ENCODE measurements at regions of chr15 and their contacts with region 1.

Region 1: GRCh38 chr15:63752075-63752684 is 81.6 kb downstream of the HERC1 start:
- DNase-seq: peak; percentile 78
- H3K4me3 ChIP-seq: no peak overlapping the region
- H3K27ac ChIP-seq: no peak overlapping the region
- H3K4me1 ChIP-seq: no peaks in the 10 kb centered on the region
- H3K27me3 ChIP-seq: no peaks in the 10 kb centered on the region
- CTCF ChIP-seq: peak; percentile 44 to 62
- POLR2A ChIP-seq: no peak

Region 2: DNA sequence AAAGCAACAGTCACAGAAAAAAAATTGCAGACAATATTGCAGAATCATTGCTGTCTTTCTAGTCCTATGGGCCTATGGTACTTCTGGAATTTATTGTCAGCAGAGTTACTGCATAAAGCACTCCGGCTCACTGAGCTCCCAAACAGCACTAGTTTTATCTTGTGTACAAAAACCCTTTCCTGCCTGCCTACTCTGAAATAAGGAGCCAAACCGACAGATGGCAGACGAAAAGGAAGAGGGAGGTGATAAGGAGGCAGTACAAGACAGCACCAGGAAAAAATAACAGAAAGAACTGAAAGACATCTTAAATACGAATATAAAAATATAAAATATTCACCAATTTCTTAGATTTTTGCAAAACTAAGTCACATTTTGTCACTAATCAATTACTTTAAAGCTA is 66.0 kb after region 1 on chr15:
- CTCF ChIA-PET with region 1: interaction called, 20 read pairs
- POLR2A ChIA-PET with region 1: no interaction called
- dilution Hi-C with region 1: no loop called
- intact Hi-C with region 1: no loop called
- DNase-seq: peak; percentile 87
- H3K4me3 ChIP-seq: no peak overlapping the region
- H3K27ac ChIP-seq: no peak overlapping the region
- H3K4me1 ChIP-seq: peaks cover 13% of the 10 kb centered on the region
- H3K27me3 ChIP-seq: no peaks in the 10 kb centered on the region
- CTCF ChIP-seq: peak; percentile 7 to 11
- POLR2A ChIP-seq: no peak

Region 3: DNA sequence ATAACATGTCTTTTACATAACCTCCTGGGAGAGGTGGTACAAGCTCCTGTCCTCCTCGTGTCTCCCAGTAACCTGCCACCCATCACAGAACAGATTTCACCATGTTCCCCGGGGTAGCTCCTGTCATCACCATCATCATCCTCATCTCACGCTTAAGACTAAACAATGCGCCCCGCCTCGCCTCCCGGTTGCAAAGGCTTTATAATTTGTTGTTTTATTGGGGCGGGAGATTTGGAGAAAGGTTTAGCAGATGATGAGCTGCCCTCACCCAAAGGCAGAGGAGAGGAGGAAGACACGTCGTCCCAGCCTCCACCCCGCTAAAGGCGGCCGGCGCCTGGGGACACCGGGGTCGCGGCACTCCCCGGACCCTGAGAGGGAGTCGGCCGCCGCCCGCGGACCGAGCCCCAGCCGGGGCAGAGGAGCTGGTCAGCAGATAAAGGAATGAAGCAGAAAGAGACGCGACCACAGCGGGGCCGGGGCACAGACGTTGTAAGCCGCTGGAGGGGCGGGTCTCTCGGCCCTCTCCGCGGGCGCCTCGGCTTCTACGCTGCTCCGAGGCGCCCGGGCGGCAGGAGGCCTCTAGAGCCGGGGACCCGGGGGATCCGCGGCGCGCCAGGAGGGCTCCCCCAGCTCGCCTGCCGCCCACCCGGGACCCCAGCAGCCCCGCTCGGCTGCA is 81.0 kb after region 1 on chr15:
- CTCF ChIA-PET with region 1: interaction called, 13 read pairs
- POLR2A ChIA-PET with region 1: no interaction called
- dilution Hi-C with region 1: no loop called
- intact Hi-C with region 1: loop called (anchors 5 kb)
- DNase-seq: no peak
- H3K4me3 ChIP-seq: peak overlapping the region; percentile 61 to 93 (median 90)
- H3K27ac ChIP-seq: peak overlapping the region; percentile 94
- H3K4me1 ChIP-seq: peaks cover 35% of the 10 kb centered on the region
- H3K27me3 ChIP-seq: no peaks in the 10 kb centered on the region
- CTCF ChIP-seq: no peak
- POLR2A ChIP-seq: no peak

Region 4: GRCh38 chr15:63891079-63891767 is 139.0 kb after region 1 on chr15:
- CTCF ChIA-PET with region 1: interaction called, 105 read pairs
- POLR2A ChIA-PET with region 1: interaction called, 3 read pairs
- dilution Hi-C with region 1: no loop called
- intact Hi-C with region 1: loop called (anchors 1 kb)
- DNase-seq: peak; percentile 90
- H3K4me3 ChIP-seq: no peak overlapping the region
- H3K27ac ChIP-seq: no peak overlapping the region
- H3K4me1 ChIP-seq: peaks cover 2% of the 10 kb centered on the region
- H3K27me3 ChIP-seq: no peaks in the 10 kb centered on the region
- CTCF ChIP-seq: peak; percentile 80
- POLR2A ChIP-seq: no peak

Region 5: DNA sequence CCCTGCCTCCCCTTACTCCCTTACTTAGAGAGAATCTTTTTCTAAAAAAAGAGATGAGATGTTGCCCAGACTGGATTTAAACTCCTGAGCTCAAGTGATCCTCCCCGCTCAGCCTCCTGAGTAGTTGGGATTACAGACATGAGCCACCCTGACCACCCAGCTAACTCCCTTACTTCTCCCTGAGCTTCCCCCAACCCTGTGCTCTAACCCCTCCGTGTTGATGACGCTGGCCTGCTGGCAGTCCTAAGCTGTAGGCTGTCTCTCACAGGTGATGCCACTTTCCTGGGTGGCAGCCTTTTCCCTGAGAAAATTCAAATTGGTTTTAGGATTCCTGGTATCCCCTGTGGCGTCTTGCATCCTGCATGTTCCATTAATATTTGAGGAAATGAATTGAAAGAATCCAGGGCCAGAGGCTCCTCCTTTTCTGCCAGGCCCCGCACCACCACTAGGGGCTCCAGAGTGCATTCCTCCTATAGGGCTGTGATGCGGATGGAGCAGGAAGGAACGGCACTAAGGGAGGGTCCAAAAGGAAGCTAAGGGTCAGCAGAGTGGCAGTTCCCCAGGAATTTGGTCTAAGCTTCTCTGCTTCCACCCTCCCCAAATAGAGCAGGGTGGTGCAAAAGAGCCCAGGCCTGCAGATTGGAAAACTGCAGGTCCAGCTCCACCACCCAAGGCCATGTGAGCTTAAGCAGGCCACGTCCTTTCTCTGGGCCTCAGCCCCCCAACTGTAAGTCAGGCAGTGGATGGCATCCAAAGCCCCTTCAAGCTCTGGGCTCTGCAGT is 193.0 kb after region 1 on chr15:
- CTCF ChIA-PET with region 1: interaction called, 5 read pairs
- POLR2A ChIA-PET with region 1: no interaction called
- dilution Hi-C with region 1: no loop called
- intact Hi-C with region 1: loop called (anchors 1 kb)
- DNase-seq: peak; percentile 54
- H3K4me3 ChIP-seq: no peak overlapping the region
- H3K27ac ChIP-seq: no peak overlapping the region
- H3K4me1 ChIP-seq: peaks cover 7% of the 10 kb centered on the region
- H3K27me3 ChIP-seq: no peaks in the 10 kb centered on the region
- CTCF ChIP-seq: peak; percentile 92
- POLR2A ChIP-seq: no peak

Region 6: GRCh38 chr15:64046347-64047153 is 294.4 kb after region 1 on chr15 and contains the start of gene DAPK2:
- CTCF ChIA-PET with region 1: interaction called, 96 read pairs
- POLR2A ChIA-PET with region 1: no interaction called
- dilution Hi-C with region 1: no loop called
- intact Hi-C with region 1: loop called (anchors 1 kb)
- DNase-seq: peak; percentile 57
- H3K4me3 ChIP-seq: peak within 1 kb of the TSS in 2 of 3 experiments; percentile 5 to 45
- H3K27ac ChIP-seq: no peak within 1 kb of the TSS
- H3K4me1 ChIP-seq: peaks cover 6% of the 10 kb centered on the region
- H3K27me3 ChIP-seq: peaks cover 13 to 19% of the 10 kb centered on the region in 2 experiments
- CTCF ChIP-seq: peak; percentile 79 to 82
- POLR2A ChIP-seq: no peak
- total RNA-seq, gene DAPK2: 6.7 and 7.5 TPM in 2 replicates

Region 7: DNA sequence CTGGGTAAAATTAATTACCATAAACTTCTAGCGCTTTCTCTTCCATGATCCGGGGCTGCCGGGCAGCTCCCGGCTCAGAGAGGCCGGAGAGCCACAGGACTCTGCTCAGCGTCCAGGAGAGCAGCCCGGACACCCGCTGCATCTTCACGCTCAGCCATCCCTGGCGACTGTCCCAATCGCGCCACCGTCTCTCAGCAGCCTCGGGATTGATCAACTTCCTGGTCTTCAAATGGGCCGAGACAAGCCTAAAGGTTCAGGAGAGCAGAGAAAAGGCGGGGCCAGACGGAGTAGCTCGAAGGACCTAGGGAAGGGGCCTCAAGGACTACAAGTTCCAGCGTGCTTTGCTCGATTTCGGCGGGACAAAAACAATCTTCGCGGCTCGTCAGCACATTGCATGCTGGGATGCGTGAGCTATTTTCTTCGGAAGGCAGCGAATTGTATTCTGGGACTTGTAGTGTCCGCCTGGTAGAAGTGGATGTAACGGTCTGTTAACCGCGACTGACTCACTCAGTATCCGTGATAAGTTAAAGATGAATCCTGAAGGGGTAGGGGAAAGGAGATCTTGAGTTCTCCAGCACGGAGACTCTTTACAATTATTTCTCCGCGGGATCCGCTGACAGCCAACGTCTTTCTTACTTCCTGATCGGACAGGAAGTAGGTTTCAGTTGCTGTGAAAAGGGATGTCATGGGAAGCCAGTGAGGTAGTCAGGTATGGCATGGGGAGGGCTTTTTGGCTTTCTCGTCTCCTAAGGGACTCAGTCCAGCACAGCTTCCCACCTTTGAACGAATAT is 341.6 kb after region 1 on chr15 and contains the start of gene CIAO2A:
- CTCF ChIA-PET with region 1: interaction called, 16 read pairs
- POLR2A ChIA-PET with region 1: no interaction called
- dilution Hi-C with region 1: no loop called
- intact Hi-C with region 1: no loop called
- DNase-seq: peak; percentile 99
- H3K4me3 ChIP-seq: peak within 1 kb of the TSS; percentile 49 to 87 (median 66)
- H3K27ac ChIP-seq: peak within 1 kb of the TSS; percentile 86
- H3K4me1 ChIP-seq: peaks cover 35% of the 10 kb centered on the region
- H3K27me3 ChIP-seq: no peaks in the 10 kb centered on the region
- CTCF ChIP-seq: no peak
- POLR2A ChIP-seq: peak; percentile 37
- total RNA-seq, gene CIAO2A: 55.3 and 59.2 TPM in 2 replicates